ENCODE measurements at regions of chr7 and their contacts with region 1.

Region 1: DNA sequence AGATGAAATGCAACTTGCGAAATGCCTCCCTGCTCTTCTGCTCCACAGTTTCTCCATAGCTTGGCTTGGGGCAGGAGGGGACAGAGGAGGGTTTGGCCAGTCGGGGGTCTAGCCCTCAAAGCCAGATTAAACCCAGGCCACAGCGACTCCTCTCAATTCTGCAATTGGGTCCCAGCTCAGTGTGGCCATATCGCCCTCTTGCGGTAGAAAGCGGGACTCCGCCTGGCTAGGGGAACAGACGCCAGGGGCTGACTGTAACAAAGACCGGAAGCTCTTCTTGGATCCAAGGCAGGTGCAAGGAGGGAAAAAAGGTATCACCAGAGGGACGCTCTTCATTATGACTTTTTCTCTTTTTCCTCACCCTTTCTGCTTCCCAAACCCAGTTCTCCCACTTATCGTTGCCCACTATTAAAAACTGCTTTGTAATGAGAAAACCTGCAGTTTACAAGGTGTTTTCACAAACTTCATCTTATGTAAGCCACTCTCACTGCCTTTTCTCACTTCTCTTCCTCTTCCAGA is 36.6 kb upstream of the TNPO3 start:
- DNase-seq: peak; percentile 94
- ATAC-seq: peak; percentile 92
- H3K4me3 Mint-ChIP-seq: no peak overlapping the region
- H3K27ac Mint-ChIP-seq: peak overlapping the region; percentile 73
- H3K4me1 Mint-ChIP-seq: peaks cover 19% of the 10 kb centered on the region
- H3K27me3 Mint-ChIP-seq: peaks cover 1% of the 10 kb centered on the region
- CTCF ChIP-seq: peak; percentile 96

Region 2: DNA sequence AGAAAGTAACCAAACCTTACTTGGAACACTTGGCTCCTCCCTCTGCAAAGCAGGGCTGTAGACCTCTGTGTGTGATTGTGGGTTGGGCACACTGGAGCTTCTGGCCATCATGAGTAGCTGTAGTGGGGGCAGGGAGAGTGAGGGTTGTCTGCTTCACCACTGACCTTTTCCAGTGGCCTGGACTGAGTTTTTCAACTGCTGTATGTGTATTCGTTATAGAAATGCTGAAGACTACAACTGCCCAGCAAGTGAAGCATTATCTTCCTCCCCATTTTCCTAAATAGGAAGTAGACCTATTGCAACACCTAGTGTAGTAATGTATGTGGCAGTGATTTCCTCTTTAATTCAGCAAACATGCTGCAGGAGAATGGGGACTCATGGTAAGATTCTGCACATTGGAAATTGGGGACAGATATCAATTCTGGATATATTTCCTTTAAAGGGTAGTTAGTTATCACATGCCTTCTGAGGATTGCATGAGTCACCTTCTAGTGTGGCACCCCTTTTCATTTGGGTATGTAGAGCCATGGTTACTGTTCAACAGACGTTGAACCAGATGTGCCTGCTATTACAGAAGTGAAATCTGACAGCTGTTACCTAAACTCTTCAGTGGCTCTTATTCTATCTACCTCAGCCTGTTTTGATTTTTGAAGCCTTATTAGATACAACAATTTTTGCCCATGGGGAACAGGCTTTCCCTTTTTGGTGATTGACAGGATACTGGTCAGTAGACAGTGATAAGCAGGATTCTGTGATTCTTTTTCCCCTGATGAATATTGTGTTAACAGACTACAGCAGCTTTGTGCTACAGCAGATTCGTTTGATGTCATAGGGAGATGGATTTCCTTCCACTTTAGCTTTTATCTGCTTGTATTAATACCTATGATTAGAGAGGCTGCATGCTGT is 1308.6 kb before region 1 on chr7:
- CTCF ChIA-PET with region 1: no interaction called
- POLR2A ChIA-PET with region 1: no interaction called
- intact Hi-C with region 1: no loop called
- DNase-seq: no peak
- ATAC-seq: no peak
- H3K4me3 Mint-ChIP-seq: no peak overlapping the region
- H3K27ac Mint-ChIP-seq: no peak overlapping the region
- H3K4me1 Mint-ChIP-seq: peaks cover 19% of the 10 kb centered on the region
- H3K27me3 Mint-ChIP-seq: no peaks in the 10 kb centered on the region
- CTCF ChIP-seq: no peak

Region 3: GRCh38 chr7:128862571-128863432 is 228.7 kb before region 1 on chr7 and contains the start of gene ATP6V1F:
- CTCF ChIA-PET with region 1: interaction called, 21 read pairs
- POLR2A ChIA-PET with region 1: no interaction called
- intact Hi-C with region 1: no loop called
- DNase-seq: peak; percentile 99
- ATAC-seq: peak; percentile 93
- H3K4me3 Mint-ChIP-seq: peak within 1 kb of the TSS; percentile 85
- H3K27ac Mint-ChIP-seq: peak within 1 kb of the TSS; percentile 87
- H3K4me1 Mint-ChIP-seq: peaks cover 21% of the 10 kb centered on the region
- H3K27me3 Mint-ChIP-seq: peaks cover under 1% of the 10 kb centered on the region
- CTCF ChIP-seq: no peak
- total RNA-seq, gene ATP6V1F: 109 to 113 TPM

Region 4: DNA sequence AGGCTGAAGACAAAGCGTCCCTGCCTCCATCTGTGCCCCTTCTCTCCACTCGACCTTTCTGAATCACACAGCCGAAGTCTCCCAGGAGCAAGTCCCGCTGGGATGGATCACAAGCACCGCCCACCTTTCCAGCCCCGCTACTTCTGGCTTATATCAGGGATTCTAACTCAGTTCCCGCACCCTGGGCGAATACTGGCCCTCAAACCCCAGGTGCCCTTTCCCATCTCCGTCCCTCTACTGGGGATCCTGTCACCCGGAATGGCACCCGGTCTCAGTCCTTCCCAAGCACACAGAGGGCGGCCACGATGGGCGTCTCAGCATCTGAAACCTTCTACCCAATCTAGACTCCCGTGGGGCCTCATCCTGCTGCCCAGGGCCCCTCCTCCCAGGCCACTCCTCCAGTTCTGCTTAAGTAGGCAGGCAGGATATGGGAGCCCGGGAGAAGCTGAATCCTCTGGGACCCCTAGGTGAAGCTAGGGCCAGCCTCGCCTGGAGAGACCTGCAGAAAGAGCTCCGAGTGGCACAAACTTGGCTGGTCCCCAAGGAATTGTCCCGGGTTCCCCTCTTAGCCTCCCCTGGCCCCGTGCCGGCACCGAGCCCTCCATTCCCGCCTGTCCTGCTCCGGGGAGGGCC is 181.8 kb before region 1 on chr7:
- CTCF ChIA-PET with region 1: interaction called, 14 read pairs
- POLR2A ChIA-PET with region 1: no interaction called
- intact Hi-C with region 1: loop called (anchors 5 kb)
- DNase-seq: no peak
- ATAC-seq: no peak
- H3K4me3 Mint-ChIP-seq: no peak overlapping the region
- H3K27ac Mint-ChIP-seq: no peak overlapping the region
- H3K4me1 Mint-ChIP-seq: peaks cover 2% of the 10 kb centered on the region
- H3K27me3 Mint-ChIP-seq: peaks cover 41% of the 10 kb centered on the region
- CTCF ChIP-seq: no peak

Region 5: GRCh38 chr7:129009437-129009836 is 82.1 kb before region 1 on chr7:
- CTCF ChIA-PET with region 1: interaction called, 31 read pairs
- POLR2A ChIA-PET with region 1: no interaction called
- intact Hi-C with region 1: no loop called
- DNase-seq: peak; percentile 13
- ATAC-seq: peak; percentile 15
- H3K4me3 Mint-ChIP-seq: no peak overlapping the region
- H3K27ac Mint-ChIP-seq: peak overlapping the region; percentile 91
- H3K4me1 Mint-ChIP-seq: peaks cover 43% of the 10 kb centered on the region
- H3K27me3 Mint-ChIP-seq: no peaks in the 10 kb centered on the region
- CTCF ChIP-seq: no peak

Region 6: GRCh38 chr7:129101746-129102145 is 10.2 kb after region 1 on chr7:
- CTCF ChIA-PET with region 1: interaction called, 33 read pairs
- POLR2A ChIA-PET with region 1: no interaction called
- intact Hi-C with region 1: no loop called
- DNase-seq: no peak
- ATAC-seq: no peak
- H3K4me3 Mint-ChIP-seq: no peak overlapping the region
- H3K27ac Mint-ChIP-seq: no peak overlapping the region
- H3K4me1 Mint-ChIP-seq: no peaks in the 10 kb centered on the region
- H3K27me3 Mint-ChIP-seq: no peaks in the 10 kb centered on the region
- CTCF ChIP-seq: no peak

Region 7: DNA sequence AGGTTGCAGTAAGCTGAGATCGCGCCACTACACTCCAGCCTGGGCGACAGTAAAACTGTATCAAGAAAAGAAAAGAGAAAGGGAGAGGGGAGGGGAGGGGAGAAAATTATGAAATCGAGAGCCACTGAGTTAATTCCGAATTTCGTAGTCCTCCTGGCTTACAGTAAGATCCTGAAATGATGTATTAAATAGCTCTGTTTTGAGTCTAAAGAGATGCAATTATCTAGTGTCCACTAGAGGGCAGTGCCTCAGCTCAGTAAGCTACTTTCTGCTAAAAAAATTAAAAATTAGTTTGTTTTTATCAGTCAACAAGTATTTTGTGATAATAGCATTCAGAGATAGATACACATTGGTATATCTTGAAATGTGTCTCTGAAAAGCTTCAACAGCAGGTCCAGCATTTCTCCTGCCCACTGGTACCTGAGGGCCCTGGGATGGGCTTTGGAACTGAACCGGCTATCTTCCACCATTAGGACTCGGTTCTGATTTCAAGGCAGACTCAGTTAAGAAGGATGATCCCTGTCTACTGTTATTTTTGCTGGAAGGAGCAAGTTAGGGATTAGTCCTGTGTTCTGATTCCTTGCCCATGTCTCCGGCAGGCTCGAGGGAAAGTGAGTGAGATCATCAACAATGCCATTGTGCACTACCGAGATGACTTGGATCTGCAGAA is 72.5 kb after region 1 on chr7:
- CTCF ChIA-PET with region 1: interaction called, 19 read pairs
- POLR2A ChIA-PET with region 1: no interaction called
- intact Hi-C with region 1: no loop called
- DNase-seq: peak; percentile 37
- ATAC-seq: peak; percentile 66
- H3K4me3 Mint-ChIP-seq: no peak overlapping the region
- H3K27ac Mint-ChIP-seq: no peak overlapping the region
- H3K4me1 Mint-ChIP-seq: peaks cover 8% of the 10 kb centered on the region
- H3K27me3 Mint-ChIP-seq: no peaks in the 10 kb centered on the region
- CTCF ChIP-seq: peak; percentile 91

Measured in activated CD8-positive, alpha-beta T cell treated with anti-CD3 and anti-CD28 coated beads for 36 hours (primary cell).